Naive thymus-derived CD4-positive, alpha-beta T cell (primary cell): ENCODE measurements at regions of chr19 and their contacts with region 1.

Region 1: GRCh38 chr19:29714953-29715700 is at the start of gene C19orf12:
- DNase-seq: peak in 7 of 9 donors; percentile 35 to 84 (median 81)
- ATAC-seq: peak; percentile 71
- H3K4me3 ChIP-seq: peak within 1 kb of the TSS; percentile 95
- H3K4me3 Mint-ChIP-seq: peak within 1 kb of the TSS; percentile 86 to 93 (median 92)
- H3K27ac ChIP-seq: peak within 1 kb of the TSS; percentile 97
- H3K27ac Mint-ChIP-seq: peak within 1 kb of the TSS; percentile 88 to 99 (median 96)
- H3K4me1 ChIP-seq: peaks cover 50 to 59% of the 10 kb centered on the region in 2 donors
- H3K4me1 Mint-ChIP-seq: peaks cover 48 to 61% (median 59%) of the 10 kb centered on the region in 7 donors
- H3K27me3 ChIP-seq: no peaks in the 10 kb centered on the region
- H3K27me3 Mint-ChIP-seq: no peaks in the 10 kb centered on the region
- total RNA-seq, gene C19orf12: 19.8 to 51.5 (median 24.6) TPM

Region 2: GRCh38 chr19:29467824-29468401 is 247.2 kb before region 1 on chr19:
- CTCF ChIA-PET with region 1: no interaction called
- POLR2A ChIA-PET with region 1: interaction called, 3 read pairs
- intact Hi-C with region 1: loop called (anchors 10 kb)
- DNase-seq: peak in 2 of 9 donors; percentile 0 to 13
- ATAC-seq: no peak
- H3K4me3 ChIP-seq: no peak overlapping the region
- H3K4me3 Mint-ChIP-seq: no peak overlapping the region
- H3K27ac ChIP-seq: no peak overlapping the region
- H3K27ac Mint-ChIP-seq: no peak overlapping the region
- H3K4me1 ChIP-seq: no peaks in the 10 kb centered on the region
- H3K4me1 Mint-ChIP-seq: peaks cover 0 to 5% (median 0%) of the 10 kb centered on the region in 7 donors
- H3K27me3 ChIP-seq: no peaks in the 10 kb centered on the region
- H3K27me3 Mint-ChIP-seq: peaks cover 13 to 44% (median 24%) of the 10 kb centered on the region in 5 donors

Region 3: GRCh38 chr19:29587518-29587986 is 127.6 kb before region 1 on chr19:
- CTCF ChIA-PET with region 1: no interaction called
- POLR2A ChIA-PET with region 1: no interaction called
- intact Hi-C with region 1: loop called in 1 of 2 experiments (anchors 1 kb)
- DNase-seq: peak in 1 of 9 donors; percentile 69
- ATAC-seq: peak; percentile 92
- H3K4me3 ChIP-seq: no peak overlapping the region
- H3K4me3 Mint-ChIP-seq: peak overlapping the region in 1 of 10 donors; percentile 32
- H3K27ac ChIP-seq: no peak overlapping the region
- H3K27ac Mint-ChIP-seq: peak overlapping the region in 3 of 9 donors; percentile 4 to 88 (median 6)
- H3K4me1 ChIP-seq: peaks cover 0 to 9% of the 10 kb centered on the region in 2 donors
- H3K4me1 Mint-ChIP-seq: peaks cover 0 to 33% (median 0%) of the 10 kb centered on the region in 7 donors
- H3K27me3 ChIP-seq: no peaks in the 10 kb centered on the region
- H3K27me3 Mint-ChIP-seq: peaks cover 22 to 45% (median 38%) of the 10 kb centered on the region in 5 donors

Region 4: GRCh38 chr19:29671393-29672160 is 43.5 kb before region 1 on chr19:
- CTCF ChIA-PET with region 1: interaction called, 59 read pairs
- POLR2A ChIA-PET with region 1: interaction called, 118 read pairs
- intact Hi-C with region 1: loop called (anchors 1 kb)
- DNase-seq: peak in 8 of 9 donors; percentile 65 to 83 (median 76)
- ATAC-seq: peak; percentile 72
- H3K4me3 ChIP-seq: peak overlapping the region; percentile 50
- H3K4me3 Mint-ChIP-seq: peak overlapping the region; percentile 78 to 93 (median 82)
- H3K27ac ChIP-seq: peak overlapping the region; percentile 94
- H3K27ac Mint-ChIP-seq: peak overlapping the region; percentile 90 to 100 (median 98)
- H3K4me1 ChIP-seq: peaks cover 95 to 96% of the 10 kb centered on the region in 2 donors
- H3K4me1 Mint-ChIP-seq: peaks cover 60 to 96% (median 83%) of the 10 kb centered on the region in 7 donors
- H3K27me3 ChIP-seq: no peaks in the 10 kb centered on the region
- H3K27me3 Mint-ChIP-seq: no peaks in the 10 kb centered on the region

Region 5: DNA sequence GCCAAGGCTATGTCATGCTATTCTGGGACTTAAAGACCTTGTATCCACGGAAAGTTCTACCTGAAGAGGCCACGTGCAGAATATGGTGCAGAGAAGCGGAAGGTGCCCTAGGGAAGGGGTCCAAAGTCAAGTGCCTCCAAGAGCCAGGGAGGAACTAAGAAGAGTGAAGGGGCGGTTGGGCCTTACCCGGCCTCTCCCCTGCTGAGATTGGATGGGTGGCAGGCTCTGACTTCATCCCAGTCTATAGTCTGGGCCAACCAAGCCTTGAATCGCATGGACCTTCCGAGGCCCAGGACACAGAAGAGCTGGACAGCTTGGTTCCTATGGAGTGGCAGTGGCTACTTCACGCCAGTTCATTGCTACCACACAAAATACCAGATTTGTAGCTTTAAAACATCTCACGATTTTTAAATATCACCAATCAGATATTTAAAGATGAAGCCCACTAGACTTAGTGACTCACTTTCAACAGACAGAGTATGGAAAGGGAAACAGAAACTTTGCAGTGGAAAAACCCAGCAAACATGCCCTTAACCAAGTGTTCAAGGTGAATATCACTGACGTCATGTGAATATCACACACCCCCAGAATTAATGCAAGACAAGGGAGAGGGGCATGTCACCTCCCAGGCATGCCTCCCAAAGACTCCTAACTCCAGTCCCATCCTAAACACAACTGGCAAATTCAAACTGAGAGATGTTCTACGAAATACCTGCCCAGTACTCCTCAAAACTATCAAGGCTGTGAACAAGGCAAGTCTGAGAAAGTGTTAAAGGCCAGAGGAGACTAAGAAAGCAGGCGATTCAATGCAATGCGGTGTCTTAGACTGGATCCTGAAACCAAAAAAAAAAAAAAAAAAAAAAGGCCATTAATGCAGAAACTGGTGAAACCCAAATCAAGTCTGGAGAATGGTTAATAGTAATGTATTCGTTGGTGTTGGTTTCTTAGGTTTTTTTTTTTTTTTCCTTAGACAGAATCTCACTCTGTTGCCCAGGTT is 10.3 kb before region 1 on chr19:
- CTCF ChIA-PET with region 1: interaction called, 6 read pairs
- POLR2A ChIA-PET with region 1: interaction called, 10 read pairs
- intact Hi-C with region 1: loop called in 1 of 2 experiments (anchors 1 kb)
- DNase-seq: no peak
- ATAC-seq: no peak
- H3K4me3 ChIP-seq: no peak overlapping the region
- H3K4me3 Mint-ChIP-seq: peak overlapping the region in 1 of 10 donors; percentile 79
- H3K27ac ChIP-seq: no peak overlapping the region
- H3K27ac Mint-ChIP-seq: peak overlapping the region; percentile 42 to 93 (median 75)
- H3K4me1 ChIP-seq: peaks cover 0 to 10% of the 10 kb centered on the region in 2 donors
- H3K4me1 Mint-ChIP-seq: peaks cover 6 to 47% (median 24%) of the 10 kb centered on the region in 7 donors
- H3K27me3 ChIP-seq: no peaks in the 10 kb centered on the region
- H3K27me3 Mint-ChIP-seq: no peaks in the 10 kb centered on the region

Region 6: DNA sequence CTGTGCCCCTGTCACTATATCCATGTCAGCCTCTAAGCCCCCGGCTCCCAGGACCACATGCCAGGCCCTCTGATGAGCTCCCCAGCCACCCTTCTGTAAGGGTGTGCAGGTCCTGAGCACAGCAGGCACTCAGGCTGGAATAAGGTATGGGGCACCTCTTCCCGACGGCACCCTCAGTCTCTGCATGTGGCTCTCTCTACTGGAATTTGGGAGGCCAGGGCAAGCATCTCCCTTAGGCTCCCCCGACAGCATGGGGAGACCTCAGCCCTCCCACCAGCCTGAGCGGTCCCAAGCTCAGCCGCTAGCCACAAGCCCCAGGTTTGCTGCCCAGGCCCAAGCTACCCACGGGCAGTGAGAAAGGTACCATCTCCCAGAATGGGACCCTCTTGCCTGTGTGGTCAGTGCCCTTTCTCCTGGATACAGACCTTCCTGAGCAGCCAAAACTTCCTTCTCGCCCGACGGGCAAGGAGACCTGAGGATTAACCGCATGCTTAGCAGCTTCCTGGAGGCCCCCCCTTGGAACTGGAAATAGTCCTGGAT is 22.4 kb after region 1 on chr19:
- CTCF ChIA-PET with region 1: no interaction called
- POLR2A ChIA-PET with region 1: no interaction called
- intact Hi-C with region 1: no loop called
- DNase-seq: no peak
- ATAC-seq: no peak
- H3K4me3 ChIP-seq: no peak overlapping the region
- H3K4me3 Mint-ChIP-seq: no peak overlapping the region
- H3K27ac ChIP-seq: no peak overlapping the region
- H3K27ac Mint-ChIP-seq: no peak overlapping the region
- H3K4me1 ChIP-seq: no peaks in the 10 kb centered on the region
- H3K4me1 Mint-ChIP-seq: no peaks in the 10 kb centered on the region
- H3K27me3 ChIP-seq: no peaks in the 10 kb centered on the region
- H3K27me3 Mint-ChIP-seq: peaks cover 0 to 11% (median 0%) of the 10 kb centered on the region in 5 donors

Region 7: DNA sequence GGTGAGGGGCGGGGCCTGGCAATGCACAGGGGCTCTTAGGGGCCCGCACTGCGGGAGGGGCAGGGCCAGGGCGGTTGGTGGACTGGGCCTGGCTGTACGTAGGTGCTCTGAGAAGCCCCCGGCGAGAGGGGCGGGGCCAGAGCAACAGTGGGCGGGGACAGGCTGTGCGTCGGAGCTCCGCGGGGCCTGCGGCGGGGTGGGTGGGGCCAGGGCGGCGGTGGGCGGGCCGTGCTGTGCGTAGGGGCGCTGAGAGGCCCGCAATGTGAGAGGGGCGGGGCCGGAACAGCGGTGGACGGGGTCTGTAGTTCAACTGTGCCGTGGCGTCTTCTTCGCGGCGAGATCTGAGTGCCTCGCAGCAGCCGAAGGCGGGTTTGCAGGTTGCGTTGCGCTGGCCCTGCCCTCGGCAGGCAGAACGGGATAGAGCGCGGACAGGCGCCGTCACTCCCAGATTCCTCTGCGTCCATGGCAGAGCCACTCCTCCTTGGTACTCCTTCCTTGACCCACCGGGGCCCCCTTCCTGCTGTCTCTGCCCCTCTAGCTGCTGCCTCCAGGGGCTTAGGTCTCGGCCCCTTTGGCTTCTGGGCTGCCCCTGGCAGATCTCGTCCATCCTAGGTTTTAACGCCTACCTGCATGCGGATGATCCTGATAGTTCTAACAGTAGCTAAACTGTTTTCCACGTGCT is 129.9 kb after region 1 on chr19:
- CTCF ChIA-PET with region 1: no interaction called
- POLR2A ChIA-PET with region 1: interaction called, 32 read pairs
- intact Hi-C with region 1: loop called (anchors 1 kb)
- DNase-seq: peak; percentile 94 to 99 (median 96)
- ATAC-seq: peak; percentile 86
- H3K4me3 ChIP-seq: peak overlapping the region; percentile 97
- H3K4me3 Mint-ChIP-seq: peak overlapping the region; percentile 87 to 98 (median 92)
- H3K27ac ChIP-seq: peak overlapping the region; percentile 92
- H3K27ac Mint-ChIP-seq: peak overlapping the region; percentile 83 to 97 (median 91)
- H3K4me1 ChIP-seq: peaks cover 9 to 17% of the 10 kb centered on the region in 2 donors
- H3K4me1 Mint-ChIP-seq: peaks cover 11 to 19% (median 14%) of the 10 kb centered on the region in 7 donors
- H3K27me3 ChIP-seq: no peaks in the 10 kb centered on the region
- H3K27me3 Mint-ChIP-seq: peaks cover 0 to 1% (median 0%) of the 10 kb centered on the region in 5 donors

Region 8: DNA sequence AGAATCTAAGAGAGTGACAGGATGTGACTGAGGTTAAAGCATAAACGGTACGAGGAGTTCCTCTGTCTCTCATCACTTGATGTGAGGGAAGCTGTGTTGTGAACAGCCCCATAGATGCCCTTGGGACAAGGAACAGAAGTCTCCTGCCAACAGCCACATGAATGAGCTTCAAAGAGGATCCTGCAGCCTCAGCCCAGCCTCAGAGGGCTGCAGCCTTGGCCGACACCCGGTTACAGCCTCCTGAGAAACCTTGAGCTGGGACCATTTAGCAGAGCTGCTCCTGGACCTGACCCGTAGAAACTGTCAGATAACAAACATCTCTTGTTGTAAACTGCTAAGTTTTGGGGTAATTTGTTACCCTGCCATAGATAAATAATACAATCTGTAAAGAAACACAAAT is 150.9 kb after region 1 on chr19:
- CTCF ChIA-PET with region 1: no interaction called
- POLR2A ChIA-PET with region 1: no interaction called
- intact Hi-C with region 1: no loop called
- DNase-seq: no peak
- ATAC-seq: no peak
- H3K4me3 ChIP-seq: no peak overlapping the region
- H3K4me3 Mint-ChIP-seq: no peak overlapping the region
- H3K27ac ChIP-seq: no peak overlapping the region
- H3K27ac Mint-ChIP-seq: no peak overlapping the region
- H3K4me1 ChIP-seq: no peaks in the 10 kb centered on the region
- H3K4me1 Mint-ChIP-seq: peaks cover 0 to 2% (median 0%) of the 10 kb centered on the region in 7 donors
- H3K27me3 ChIP-seq: peaks cover 0 to 3% of the 10 kb centered on the region in 2 donors
- H3K27me3 Mint-ChIP-seq: peaks cover 4 to 32% (median 7%) of the 10 kb centered on the region in 5 donors